ENCODE measurements at regions of chr1 and their contacts with region 1.

Region 1: GRCh38 chr1:32933742-32934322 is 30.8 kb downstream of the RNF19B start:
- DNase-seq: peak; percentile 24
- H3K4me3 ChIP-seq: no peak overlapping the region
- H3K27ac ChIP-seq: no peak overlapping the region
- H3K4me1 ChIP-seq: no peaks in the 10 kb centered on the region
- H3K27me3 ChIP-seq: no peaks in the 10 kb centered on the region
- CTCF ChIP-seq: no peak

Region 2: DNA sequence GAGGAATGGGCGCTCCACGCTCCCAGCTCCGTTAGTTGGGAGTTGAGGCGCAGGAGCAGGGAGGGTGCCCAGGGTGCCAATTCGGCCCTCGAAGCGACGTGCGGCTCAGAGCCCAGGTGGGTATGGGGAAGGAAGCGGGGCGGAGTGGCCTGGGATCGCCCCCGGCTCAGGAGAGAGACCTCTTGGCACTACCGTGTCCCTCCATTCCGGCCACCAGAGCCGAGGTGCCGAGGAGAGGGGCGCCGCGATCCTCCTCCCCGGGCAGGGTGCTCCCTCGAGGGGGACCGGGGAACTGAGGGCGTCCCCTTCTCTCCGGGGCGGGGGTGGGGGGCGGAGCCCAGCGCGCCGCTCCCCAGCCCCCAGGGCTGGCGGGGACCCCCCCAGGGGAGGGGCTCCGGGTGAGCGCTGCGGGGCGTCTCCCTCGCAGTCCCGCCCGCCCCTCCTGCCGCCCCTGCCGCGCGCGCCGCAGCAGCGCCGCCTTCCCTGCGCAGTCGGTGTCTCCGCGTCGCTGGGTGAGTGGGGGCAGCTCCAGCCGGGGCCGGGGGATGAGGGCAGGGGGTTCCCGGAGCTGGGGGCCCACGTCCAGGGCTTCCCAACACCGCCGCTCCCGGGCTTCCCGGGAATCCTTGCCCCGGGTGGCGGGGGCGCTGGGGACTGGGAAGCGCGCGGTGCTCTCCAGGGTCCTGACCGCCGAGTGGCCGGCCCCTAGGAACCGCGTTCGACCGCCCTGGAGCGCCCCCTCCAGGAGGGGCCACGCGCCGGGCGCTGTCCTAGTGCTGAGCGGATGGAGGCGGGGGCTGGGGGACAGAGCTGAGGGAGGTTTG is 47.6 kb before region 1 on chr1 and contains the start of gene HPCA:
- CTCF ChIA-PET with region 1: no interaction called
- POLR2A ChIA-PET with region 1: no interaction called
- intact Hi-C with region 1: no loop called
- DNase-seq: peak; percentile 69
- H3K4me3 ChIP-seq: peak within 1 kb of the TSS; percentile 27
- H3K27ac ChIP-seq: no peak within 1 kb of the TSS
- H3K4me1 ChIP-seq: peaks cover 4% of the 10 kb centered on the region
- H3K27me3 ChIP-seq: peaks cover 11% of the 10 kb centered on the region
- CTCF ChIP-seq: peak; percentile 78
- total RNA-seq, gene HPCA: 0.69 and 0.98 TPM in 2 replicates

Region 3: GRCh38 chr1:32900951-32901822 is 32.6 kb before region 1 on chr1 and contains the start of gene TMEM54:
- CTCF ChIA-PET with region 1: no interaction called
- POLR2A ChIA-PET with region 1: no interaction called
- intact Hi-C with region 1: loop called (anchors 2 kb)
- DNase-seq: no peak
- H3K4me3 ChIP-seq: peak within 1 kb of the TSS; percentile 49
- H3K27ac ChIP-seq: no peak within 1 kb of the TSS
- H3K4me1 ChIP-seq: peaks cover 7% of the 10 kb centered on the region
- H3K27me3 ChIP-seq: peaks cover 5% of the 10 kb centered on the region
- CTCF ChIP-seq: no peak
- total RNA-seq, gene TMEM54: 3.2 and 4.8 TPM in 2 replicates

Region 4: GRCh38 chr1:33007190-33008050 is 73.6 kb after region 1 on chr1:
- CTCF ChIA-PET with region 1: interaction called, 18 read pairs
- POLR2A ChIA-PET with region 1: no interaction called
- intact Hi-C with region 1: loop called (anchors 2 kb)
- DNase-seq: peak; percentile 84
- H3K4me3 ChIP-seq: no peak overlapping the region
- H3K27ac ChIP-seq: no peak overlapping the region
- H3K4me1 ChIP-seq: peaks cover 8% of the 10 kb centered on the region
- H3K27me3 ChIP-seq: no peaks in the 10 kb centered on the region
- CTCF ChIP-seq: peak; percentile 47

Region 5: GRCh38 chr1:33055210-33056008 is 121.6 kb after region 1 on chr1:
- CTCF ChIA-PET with region 1: interaction called, 3 read pairs
- POLR2A ChIA-PET with region 1: no interaction called
- intact Hi-C with region 1: loop called (anchors 1 kb)
- DNase-seq: peak; percentile 64
- H3K4me3 ChIP-seq: no peak overlapping the region
- H3K27ac ChIP-seq: no peak overlapping the region
- H3K4me1 ChIP-seq: no peaks in the 10 kb centered on the region
- H3K27me3 ChIP-seq: no peaks in the 10 kb centered on the region
- CTCF ChIP-seq: peak; percentile 66

Region 6: GRCh38 chr1:33086384-33086850 is 152.6 kb after region 1 on chr1:
- CTCF ChIA-PET with region 1: interaction called, 4 read pairs
- POLR2A ChIA-PET with region 1: no interaction called
- intact Hi-C with region 1: loop called (anchors 5 kb)
- DNase-seq: peak; percentile 63
- H3K4me3 ChIP-seq: no peak overlapping the region
- H3K27ac ChIP-seq: no peak overlapping the region
- H3K4me1 ChIP-seq: no peaks in the 10 kb centered on the region
- H3K27me3 ChIP-seq: no peaks in the 10 kb centered on the region
- CTCF ChIP-seq: peak; percentile 77

Region 7: DNA sequence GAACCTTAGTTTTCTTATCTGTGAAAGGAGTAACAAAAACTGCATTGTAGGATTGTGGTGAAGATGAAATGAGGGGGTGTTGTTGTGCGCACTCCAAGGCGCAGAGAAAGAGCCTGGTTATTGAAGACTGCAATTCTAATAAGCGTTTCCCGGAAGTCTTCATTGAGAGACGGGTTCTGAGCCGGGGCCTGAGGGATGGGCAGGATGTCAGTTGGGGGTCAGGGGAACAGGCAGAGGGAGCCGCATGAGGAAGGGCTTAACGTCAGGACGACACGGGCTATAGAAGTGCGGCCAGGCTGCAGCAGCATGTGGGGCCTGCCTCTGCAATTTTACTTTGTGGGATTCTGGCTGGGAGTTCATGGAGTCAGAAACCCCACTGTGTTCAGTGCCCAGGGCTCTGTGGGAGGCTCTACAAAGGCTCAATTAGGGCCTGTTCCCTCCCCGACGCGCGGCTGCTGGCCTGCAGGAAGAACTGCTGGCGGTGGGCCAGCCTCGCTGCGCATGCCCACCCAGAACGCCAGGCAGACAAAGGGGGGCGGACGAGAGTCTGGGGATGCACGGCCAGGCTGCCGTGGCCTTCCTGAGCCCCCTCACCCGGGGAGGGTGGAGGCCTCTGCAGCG is 227.3 kb after region 1 on chr1:
- CTCF ChIA-PET with region 1: no interaction called
- POLR2A ChIA-PET with region 1: no interaction called
- intact Hi-C with region 1: no loop called
- DNase-seq: peak; percentile 81
- H3K4me3 ChIP-seq: no peak overlapping the region
- H3K27ac ChIP-seq: no peak overlapping the region
- H3K4me1 ChIP-seq: peaks cover 13% of the 10 kb centered on the region
- H3K27me3 ChIP-seq: no peaks in the 10 kb centered on the region
- CTCF ChIP-seq: no peak

Measured in A673 (cell line).